Left ventricle myocardium superior (tissue), 1 donor: ENCODE measurements at regions of chr10 and their contacts with region 1.

Region 1: GRCh38 chr10:31808258-31809218 is 120.1 kb downstream of the ARHGAP12 start:
- DNase-seq: no peak
- ATAC-seq: peak; percentile 81

Region 2: GRCh38 chr10:30751678-30752331 is 1056.7 kb before region 1 on chr10:
- intact Hi-C with region 1: loop called (anchors 10 kb)
- DNase-seq: peak; percentile 88
- ATAC-seq: peak; percentile 86